ENCODE measurements at regions of chr16 and their contacts with region 1.

Region 1: DNA sequence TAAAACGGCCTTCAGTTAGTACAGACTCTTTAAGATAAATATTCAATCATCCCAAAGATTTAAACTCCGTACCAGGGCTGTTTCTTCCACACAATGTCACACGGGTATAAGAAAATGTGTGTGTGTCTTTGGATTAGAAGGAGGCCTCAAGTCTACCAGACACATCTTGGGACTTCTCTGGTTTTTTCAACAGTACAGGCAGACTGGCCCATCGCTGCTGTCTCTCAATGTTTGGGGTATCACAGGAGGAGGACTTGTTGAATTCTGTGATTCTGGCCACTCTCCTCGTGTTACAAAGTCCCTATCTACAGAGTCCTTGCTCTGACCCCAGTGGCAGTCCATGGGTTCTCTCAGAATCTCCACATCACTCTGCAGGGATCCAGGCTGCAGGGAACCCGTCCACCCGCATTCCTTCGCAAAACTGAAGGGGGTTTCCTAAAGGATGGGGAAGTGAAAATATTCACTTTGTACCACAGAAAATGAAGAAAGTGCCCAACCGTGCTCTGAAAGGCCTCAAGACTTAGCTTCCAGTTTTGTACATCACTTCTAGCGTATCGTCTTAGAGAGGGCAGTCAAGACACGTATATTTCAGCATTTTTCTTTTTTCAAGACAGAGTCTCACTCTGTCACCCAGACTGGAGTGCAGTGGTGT is 373.2 kb downstream of the NPIPA8 start:
- DNase-seq: no peak
- H3K4me3 ChIP-seq: no peak overlapping the region
- CTCF ChIP-seq: no peak

Region 2: GRCh38 chr16:17683281-17683680 is 280.0 kb before region 1 on chr16:
- in situ Hi-C with region 1: loop called (anchors 10 kb)
- DNase-seq: no peak
- H3K4me3 ChIP-seq: no peak overlapping the region
- CTCF ChIP-seq: no peak